HCT116 (cell line): ENCODE measurements at regions of chr2 and their contacts with region 1.

Region 1: DNA sequence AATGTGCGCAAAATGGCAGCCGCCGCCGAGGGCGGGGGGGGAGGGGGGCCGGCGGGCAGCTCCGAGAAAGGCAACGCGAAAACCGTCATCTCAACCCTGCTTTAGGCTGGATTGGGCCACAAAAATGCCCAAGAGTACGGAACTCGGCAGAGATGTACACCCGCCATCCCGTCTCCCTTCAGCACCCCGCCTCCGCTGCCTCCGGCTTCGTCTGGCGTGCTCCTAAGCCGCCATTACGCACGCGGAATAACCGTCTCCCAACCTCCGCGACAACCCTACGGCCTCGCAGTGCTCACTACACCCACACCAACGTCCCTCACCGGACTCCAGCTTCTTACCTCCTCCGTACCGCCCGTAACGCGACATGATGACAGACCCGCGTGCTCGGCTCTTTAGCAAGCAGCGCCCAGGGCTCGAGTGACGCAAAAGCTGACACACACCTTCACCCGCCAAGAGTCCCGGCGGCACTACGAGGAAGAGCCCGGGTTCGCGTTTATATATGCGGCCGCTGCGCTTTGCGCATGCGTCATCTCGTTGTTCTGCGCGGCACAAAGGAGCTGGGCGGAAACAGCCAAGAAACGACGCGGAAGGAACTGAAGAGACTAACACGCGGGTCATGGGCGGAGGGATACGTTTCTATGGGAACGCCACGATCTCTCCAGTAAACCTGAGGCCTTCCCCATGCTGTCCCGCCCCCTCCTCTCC is at the start of gene SRSF7:
- DNase-seq: peak; percentile 99
- ATAC-seq: peak; percentile 87
- H3K4me3 ChIP-seq: peak within 1 kb of the TSS; percentile 76 to 100
- H3K27ac ChIP-seq: peak within 1 kb of the TSS; percentile 86
- H3K4me1 ChIP-seq: peaks cover 9 to 17% of the 10 kb centered on the region in 2 experiments
- H3K27me3 ChIP-seq: no peaks in the 10 kb centered on the region
- CTCF ChIP-seq: no peak
- POLR2A ChIP-seq: peak; percentile 100
- RAD21 ChIP-seq: no peak
- total RNA-seq, gene SRSF7: 215 TPM

Region 2: DNA sequence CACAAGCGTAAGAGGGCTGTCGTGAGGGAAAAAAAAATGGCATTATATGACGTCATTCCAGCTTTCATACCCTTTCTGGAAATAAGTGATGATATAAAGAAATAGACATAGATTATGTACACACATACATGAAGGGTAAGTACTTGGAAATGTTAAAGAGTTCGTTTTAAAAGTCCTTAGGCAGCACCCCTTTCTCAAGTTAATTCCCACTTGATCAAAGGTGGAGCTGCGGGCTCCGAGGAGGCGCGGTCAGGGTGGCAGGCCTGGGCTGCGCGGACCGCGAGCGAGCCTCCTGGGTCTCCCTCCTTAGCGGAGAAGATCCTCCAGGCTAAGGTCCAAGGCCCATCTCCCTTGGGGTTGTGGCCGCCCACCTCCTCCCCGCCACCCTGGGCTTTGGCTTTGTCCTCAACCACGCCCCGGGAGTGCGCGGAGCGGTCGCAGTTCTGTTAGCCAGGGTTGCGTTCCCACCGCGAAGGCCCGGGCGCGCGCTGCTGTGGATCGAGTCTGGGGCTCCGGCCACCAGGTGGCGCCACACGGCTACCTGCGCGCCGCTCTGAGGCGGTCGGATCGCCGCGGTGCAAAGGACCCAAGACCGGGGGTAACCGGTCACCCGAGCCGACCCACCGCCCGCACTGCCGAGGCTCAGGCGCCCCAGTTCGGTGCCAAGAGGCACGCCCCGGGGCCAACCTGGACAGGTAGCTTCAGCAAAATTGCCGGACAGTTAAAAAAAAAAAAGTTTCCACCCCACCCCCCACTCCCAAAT is 215.1 kb before region 1 on chr2:
- CTCF ChIA-PET with region 1: interaction called, 3 read pairs
- POLR2A ChIA-PET with region 1: interaction called, 14 read pairs
- RAD21 ChIA-PET with region 1: no interaction called
- intact Hi-C with region 1: no loop called
- DNase-seq: peak; percentile 37
- ATAC-seq: peak; percentile 96
- H3K4me3 ChIP-seq: peak overlapping the region; percentile 47 to 54
- H3K27ac ChIP-seq: no peak overlapping the region
- H3K4me1 ChIP-seq: peaks cover 14% of the 10 kb centered on the region in 2 experiments; a peak in 3 of 4 replicates
- H3K27me3 ChIP-seq: no peaks in the 10 kb centered on the region
- CTCF ChIP-seq: peak; percentile 81 to 84 (median 82)
- POLR2A ChIP-seq: no peak
- RAD21 ChIP-seq: peak; percentile 88

Region 3: DNA sequence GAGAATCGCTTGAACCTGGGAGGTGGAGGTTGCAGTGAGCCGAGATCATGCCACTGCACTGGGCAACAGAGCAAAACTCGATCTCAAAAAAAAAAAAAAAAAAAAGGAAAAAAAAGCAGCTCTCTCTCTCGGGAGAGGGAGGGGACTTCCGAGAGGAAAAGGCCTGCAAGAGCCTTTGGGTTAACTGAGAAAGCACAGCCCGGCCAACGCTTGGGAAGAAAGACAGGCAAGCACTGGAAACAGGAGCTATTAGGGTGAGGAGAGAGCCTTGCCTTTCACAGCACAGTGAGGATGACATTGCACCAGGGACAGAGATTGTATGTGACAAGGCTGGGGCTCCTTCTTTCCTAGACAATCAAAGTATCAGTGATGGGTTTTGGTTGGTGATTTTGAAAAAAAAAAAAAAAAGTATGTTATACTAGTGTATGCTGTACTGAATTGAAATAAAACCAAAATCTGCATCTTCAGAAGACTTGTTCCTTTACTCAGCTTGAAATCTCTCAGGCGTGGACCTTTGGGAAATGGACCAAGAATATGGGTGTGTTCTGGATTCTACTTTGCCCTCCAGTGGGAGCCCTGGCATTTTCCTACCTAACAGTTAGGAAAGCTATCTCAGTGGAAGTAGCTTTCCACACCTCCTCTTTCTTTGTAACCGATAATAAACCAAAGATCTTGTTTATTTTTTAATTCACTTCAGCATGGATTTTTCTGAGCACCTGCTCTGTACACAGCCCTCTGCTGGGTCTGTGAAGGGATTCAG is 16.6 kb before region 1 on chr2:
- CTCF ChIA-PET with region 1: no interaction called
- POLR2A ChIA-PET with region 1: interaction called, 26 read pairs
- RAD21 ChIA-PET with region 1: no interaction called
- intact Hi-C with region 1: no loop called
- DNase-seq: no peak
- ATAC-seq: no peak
- H3K4me3 ChIP-seq: no peak overlapping the region
- H3K27ac ChIP-seq: no peak overlapping the region
- H3K4me1 ChIP-seq: no peaks in the 10 kb centered on the region
- H3K27me3 ChIP-seq: no peaks in the 10 kb centered on the region
- CTCF ChIP-seq: no peak
- POLR2A ChIP-seq: no peak
- RAD21 ChIP-seq: no peak

Region 4: GRCh38 chr2:38765149-38765548 is 14.1 kb after region 1 on chr2:
- CTCF ChIA-PET with region 1: no interaction called
- POLR2A ChIA-PET with region 1: interaction called, 27 read pairs
- RAD21 ChIA-PET with region 1: no interaction called
- intact Hi-C with region 1: no loop called
- DNase-seq: no peak
- ATAC-seq: no peak
- H3K4me3 ChIP-seq: no peak overlapping the region
- H3K27ac ChIP-seq: no peak overlapping the region
- H3K4me1 ChIP-seq: no peaks in the 10 kb centered on the region
- H3K27me3 ChIP-seq: no peaks in the 10 kb centered on the region
- CTCF ChIP-seq: no peak
- POLR2A ChIP-seq: no peak
- RAD21 ChIP-seq: no peak

Region 5: DNA sequence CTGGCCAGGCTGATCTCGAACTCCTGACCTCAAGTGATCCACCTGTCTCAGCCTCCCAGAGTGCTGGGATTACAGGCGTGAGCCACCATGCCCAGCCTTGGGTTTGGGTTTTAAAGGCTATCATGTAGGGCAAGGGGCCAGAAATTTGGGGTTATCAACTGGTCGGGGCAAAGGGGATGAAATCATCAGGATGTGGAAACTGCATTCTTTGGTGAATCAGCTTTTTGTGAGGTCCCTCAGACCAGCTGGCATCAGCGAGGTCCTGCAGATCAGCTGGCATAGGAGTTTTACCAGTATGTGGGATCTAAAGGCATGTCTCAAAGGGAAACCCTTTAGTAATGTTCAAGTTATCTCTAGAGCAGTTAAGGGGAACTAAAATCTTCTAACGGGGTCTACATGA is 20.6 kb after region 1 on chr2:
- CTCF ChIA-PET with region 1: no interaction called
- POLR2A ChIA-PET with region 1: interaction called, 17 read pairs
- RAD21 ChIA-PET with region 1: no interaction called
- intact Hi-C with region 1: no loop called
- DNase-seq: no peak
- ATAC-seq: no peak
- H3K4me3 ChIP-seq: no peak overlapping the region
- H3K27ac ChIP-seq: no peak overlapping the region
- H3K4me1 ChIP-seq: no peaks in the 10 kb centered on the region
- H3K27me3 ChIP-seq: no peaks in the 10 kb centered on the region
- CTCF ChIP-seq: no peak
- POLR2A ChIP-seq: no peak
- RAD21 ChIP-seq: no peak